ENCODE measurements at regions of chr6 and their contacts with region 1.

Region 1: DNA sequence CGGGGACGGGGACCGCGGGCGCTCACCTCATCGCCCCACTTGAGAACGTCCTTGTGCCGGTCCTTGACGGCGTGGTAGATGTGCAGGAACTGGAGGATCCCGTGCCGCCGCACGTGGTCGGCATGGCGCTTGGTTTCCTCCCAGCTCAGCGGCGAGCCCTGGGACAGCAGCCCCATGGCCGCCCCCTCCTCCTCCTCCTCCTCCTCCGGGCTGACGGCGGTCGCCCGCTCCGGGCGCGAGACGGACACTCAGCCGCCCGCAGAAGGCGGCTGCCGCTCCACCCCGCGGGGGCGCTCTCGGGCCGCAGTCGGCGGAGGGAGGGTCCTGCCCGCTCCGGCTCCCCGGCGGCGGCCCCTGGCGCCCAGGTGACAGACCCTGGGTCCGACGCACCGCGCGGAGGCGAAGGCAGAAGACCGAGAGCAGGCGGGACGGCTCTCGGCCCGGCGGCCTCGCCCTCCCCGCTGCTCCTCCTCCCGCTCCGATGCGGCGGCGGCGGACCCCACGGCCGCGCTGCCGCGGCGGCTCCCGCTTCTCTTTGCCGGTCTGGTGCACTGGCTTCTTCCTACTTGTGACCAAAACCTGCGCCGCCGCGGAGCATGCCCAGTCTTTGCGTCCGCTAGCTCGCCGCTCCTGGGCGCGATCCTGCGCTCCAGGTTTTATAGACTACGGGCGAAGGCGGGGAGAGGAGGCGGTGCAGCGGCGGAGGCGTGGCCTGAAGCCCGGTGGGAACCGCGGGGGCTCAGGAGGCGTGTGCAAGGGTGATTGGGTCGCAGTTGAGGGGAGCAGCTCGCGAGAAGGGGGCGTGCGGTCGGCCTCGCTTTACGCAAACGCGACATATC is at the start of gene GCLC:
- DNase-seq: peak; percentile 84
- H3K4me3 Mint-ChIP-seq: peak within 1 kb of the TSS; percentile 96
- H3K27ac Mint-ChIP-seq: peak within 1 kb of the TSS; percentile 96
- H3K4me1 Mint-ChIP-seq: peaks cover 49% of the 10 kb centered on the region
- H3K27me3 Mint-ChIP-seq: peaks cover 10% of the 10 kb centered on the region
- total RNA-seq, gene GCLC: 26.1 and 28.9 TPM in 2 replicates

Region 2: DNA sequence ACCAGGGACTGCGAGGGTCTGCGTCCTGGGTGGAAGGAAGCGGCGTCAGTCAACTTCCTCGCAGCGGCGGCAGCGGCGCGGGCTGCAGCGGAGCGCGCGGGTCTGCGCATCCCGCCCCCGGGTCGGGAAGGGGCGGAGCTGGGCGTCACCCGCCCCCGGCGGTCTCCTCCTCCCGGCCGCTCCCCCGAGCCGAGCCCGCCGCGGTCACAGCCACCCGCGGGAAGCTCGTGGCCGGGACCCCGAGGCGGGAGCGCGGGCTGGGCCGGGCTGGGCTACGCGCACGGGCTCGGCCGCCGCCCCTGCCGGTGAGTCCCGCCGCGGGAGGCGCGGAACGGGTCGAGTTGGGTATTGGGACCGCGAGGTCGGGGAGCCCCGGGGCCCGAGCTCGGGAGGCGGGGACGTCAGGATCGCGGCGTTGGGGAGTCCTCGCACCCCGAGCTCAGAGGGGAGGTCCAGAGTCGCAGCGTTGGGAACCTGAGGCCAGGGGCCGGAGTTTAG is 1182.7 kb before region 1 on chr6 and contains the start of gene PAQR8:
- intact Hi-C with region 1: loop called (anchors 10 kb)
- DNase-seq: peak; percentile 75
- H3K4me3 Mint-ChIP-seq: peak within 1 kb of the TSS; percentile 96
- H3K27ac Mint-ChIP-seq: peak within 1 kb of the TSS; percentile 84
- H3K4me1 Mint-ChIP-seq: peaks cover 33% of the 10 kb centered on the region
- H3K27me3 Mint-ChIP-seq: peaks cover 7% of the 10 kb centered on the region
- total RNA-seq, gene PAQR8: 2.5 and 2.8 TPM in 2 replicates

Region 3: GRCh38 chr6:52995913-52996645 is 548.6 kb before region 1 on chr6:
- intact Hi-C with region 1: loop called (anchors 2 kb)
- DNase-seq: no peak
- H3K4me3 Mint-ChIP-seq: peak overlapping the region; percentile 88
- H3K27ac Mint-ChIP-seq: peak overlapping the region; percentile 99
- H3K4me1 Mint-ChIP-seq: peaks cover 47% of the 10 kb centered on the region
- H3K27me3 Mint-ChIP-seq: peaks cover 11% of the 10 kb centered on the region

Region 4: DNA sequence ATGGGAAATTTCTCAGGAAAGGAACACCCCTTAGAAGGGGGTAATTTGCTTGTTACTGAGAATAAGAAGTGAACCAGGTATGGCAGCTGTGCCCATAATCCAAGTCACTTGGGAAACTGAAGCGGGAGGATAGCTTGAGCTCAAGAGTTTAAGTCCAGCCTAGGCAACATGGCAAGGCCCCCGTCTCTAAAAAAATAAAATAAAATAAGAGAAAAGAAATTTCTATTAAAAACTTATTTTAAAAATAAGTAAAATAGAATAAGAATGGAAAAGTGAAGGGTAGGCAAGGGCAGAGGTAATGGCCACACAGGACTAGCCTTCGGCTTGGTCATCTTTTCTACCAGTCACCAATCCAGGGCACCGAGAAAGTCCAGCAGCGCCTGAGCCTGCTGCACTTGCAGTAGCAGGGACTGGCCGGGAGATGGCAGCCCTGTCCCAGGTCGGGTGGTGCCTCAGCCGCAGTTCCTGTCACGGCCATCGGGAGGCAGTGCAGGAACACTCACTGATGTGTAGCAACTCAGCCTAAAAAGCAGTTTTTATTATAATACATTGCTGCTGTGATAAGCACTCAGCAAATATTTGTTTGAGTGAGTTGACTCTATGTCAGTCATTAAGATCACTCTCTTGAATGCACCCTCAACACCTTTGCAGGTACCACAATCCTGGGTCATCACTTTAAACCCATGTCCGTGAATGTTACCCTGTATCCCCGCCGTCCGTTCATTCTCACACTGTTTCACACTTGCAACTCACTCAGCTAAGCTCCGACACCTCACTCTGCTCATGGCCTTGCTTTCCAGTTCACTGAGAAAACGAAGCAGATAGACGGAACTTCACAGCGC is 372.9 kb before region 1 on chr6:
- intact Hi-C with region 1: loop called (anchors 5 kb)
- DNase-seq: peak; percentile 82
- H3K4me3 Mint-ChIP-seq: no peak overlapping the region
- H3K27ac Mint-ChIP-seq: no peak overlapping the region
- H3K4me1 Mint-ChIP-seq: no peaks in the 10 kb centered on the region
- H3K27me3 Mint-ChIP-seq: no peaks in the 10 kb centered on the region

Region 5: DNA sequence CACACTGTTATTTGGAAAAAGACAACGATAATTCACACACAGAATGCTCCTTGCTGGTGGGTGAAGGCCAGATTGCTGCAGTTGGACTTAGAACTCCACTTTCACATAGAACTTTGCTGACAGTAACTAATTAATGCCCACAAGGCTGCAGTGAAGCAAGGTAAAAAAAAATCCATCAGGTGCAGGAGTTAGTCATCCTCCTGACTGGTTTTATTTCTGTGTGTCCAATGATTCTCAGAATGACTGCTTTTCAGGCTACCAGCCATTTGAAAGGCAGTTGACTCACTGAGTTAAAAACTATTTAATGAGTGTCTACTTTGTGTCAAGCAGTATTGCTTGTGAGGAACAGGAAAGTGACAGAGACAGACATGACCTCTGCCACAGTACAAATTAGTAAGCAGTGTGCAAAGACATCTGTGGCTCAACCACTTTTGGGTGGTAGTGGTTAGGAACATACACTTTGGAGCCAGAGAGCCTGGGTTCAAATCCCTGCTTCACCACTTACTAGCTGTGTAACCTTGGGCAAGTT is 237.8 kb before region 1 on chr6:
- intact Hi-C with region 1: no loop called
- DNase-seq: peak; percentile 24
- H3K4me3 Mint-ChIP-seq: peak overlapping the region; percentile 7
- H3K27ac Mint-ChIP-seq: peak overlapping the region; percentile 18
- H3K4me1 Mint-ChIP-seq: peaks cover 83% of the 10 kb centered on the region
- H3K27me3 Mint-ChIP-seq: no peaks in the 10 kb centered on the region

Region 6: DNA sequence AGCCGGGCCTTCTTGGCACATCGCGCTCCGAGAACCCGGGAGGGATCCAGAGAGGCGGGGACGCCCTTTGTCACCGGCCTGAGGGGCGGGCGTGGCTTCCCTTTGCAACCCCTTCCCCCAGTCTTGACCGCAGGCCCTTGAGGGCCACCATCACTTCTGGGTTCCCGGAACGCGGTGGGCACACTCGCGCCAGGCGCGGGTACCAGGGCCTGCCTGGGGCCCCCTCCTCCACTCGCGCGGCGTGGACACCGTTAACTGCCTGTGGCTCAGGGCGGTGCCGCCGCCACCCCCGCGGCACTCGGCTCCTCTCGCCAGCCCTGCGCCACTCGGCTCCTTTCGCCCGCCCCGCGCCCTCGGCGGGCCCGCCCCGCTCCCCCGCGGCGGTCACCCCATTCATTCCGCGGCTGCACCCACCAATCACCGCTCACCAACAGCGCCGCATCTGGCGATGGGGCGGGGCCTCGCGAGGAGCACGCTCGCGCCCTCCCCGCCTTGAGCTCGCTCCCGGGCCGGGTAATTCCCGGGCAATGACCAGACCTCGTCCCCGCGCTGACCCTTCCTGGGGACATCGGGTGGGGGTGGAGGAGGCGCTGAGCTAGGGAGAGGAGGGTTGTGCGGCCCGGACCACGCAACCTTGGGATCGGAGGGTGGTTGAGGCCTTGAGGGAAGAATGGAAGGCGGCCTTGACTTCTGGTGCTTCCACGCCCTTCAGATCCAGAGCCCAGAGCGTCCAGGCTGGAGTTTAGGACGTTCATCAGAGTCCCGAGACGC is 185.4 kb before region 1 on chr6:
- intact Hi-C with region 1: loop called (anchors 1 kb)
- DNase-seq: peak; percentile 93
- H3K4me3 Mint-ChIP-seq: peak overlapping the region; percentile 92
- H3K27ac Mint-ChIP-seq: peak overlapping the region; percentile 100
- H3K4me1 Mint-ChIP-seq: peaks cover 50% of the 10 kb centered on the region
- H3K27me3 Mint-ChIP-seq: peaks cover 5% of the 10 kb centered on the region

Region 7: GRCh38 chr6:53651764-53652401 is 107.2 kb after region 1 on chr6:
- intact Hi-C with region 1: loop called (anchors 1 kb)
- DNase-seq: peak; percentile 64
- H3K4me3 Mint-ChIP-seq: peak overlapping the region; percentile 90
- H3K27ac Mint-ChIP-seq: peak overlapping the region; percentile 81
- H3K4me1 Mint-ChIP-seq: peaks cover 31% of the 10 kb centered on the region
- H3K27me3 Mint-ChIP-seq: peaks cover 30% of the 10 kb centered on the region

Region 8: DNA sequence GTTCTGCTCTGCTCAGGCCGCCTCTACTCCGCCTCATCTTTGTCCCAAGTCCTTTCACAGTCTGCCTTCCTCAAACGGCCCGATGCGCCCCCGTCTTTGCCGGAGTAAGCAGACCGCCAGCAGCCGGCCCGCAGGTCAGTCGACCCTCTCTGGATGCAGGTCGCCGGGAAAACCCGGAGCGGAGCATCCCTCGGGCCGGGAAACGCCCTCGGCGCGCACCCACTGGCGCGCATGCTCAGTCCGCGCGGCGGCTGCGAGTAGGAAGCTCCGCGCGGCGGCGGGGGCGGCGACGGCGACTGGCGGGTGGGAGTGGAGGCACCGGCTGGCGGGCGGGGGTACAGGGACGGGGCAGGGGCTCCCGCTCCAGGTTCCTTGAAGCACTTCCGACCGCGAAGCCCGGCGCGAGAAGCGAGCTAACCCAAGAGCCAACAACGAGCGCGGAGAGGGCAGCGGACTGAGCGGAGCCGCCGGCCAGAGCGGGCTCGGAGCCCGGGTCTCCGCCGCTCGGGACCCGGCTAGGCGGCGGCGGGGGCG is 250.1 kb after region 1 on chr6 and contains the start of gene LRRC1:
- intact Hi-C with region 1: loop called (anchors 1 kb)
- DNase-seq: peak; percentile 86
- H3K4me3 Mint-ChIP-seq: peak within 1 kb of the TSS; percentile 96
- H3K27ac Mint-ChIP-seq: peak within 1 kb of the TSS; percentile 78
- H3K4me1 Mint-ChIP-seq: peaks cover 41% of the 10 kb centered on the region
- H3K27me3 Mint-ChIP-seq: peaks cover 53% of the 10 kb centered on the region
- total RNA-seq, gene LRRC1: 1.7 and 1.9 TPM in 2 replicates